Breast epithelium (tissue), 4 donors: ENCODE measurements at regions of chr16 and their contacts with region 1.

Region 1: GRCh38 chr16:76955629-76956028 is 235.4 kb upstream of the MON1B start:
- DNase-seq: no peak
- H3K4me3 ChIP-seq: no peak overlapping the region
- H3K27ac ChIP-seq: no peak overlapping the region
- H3K4me1 ChIP-seq: no peaks in the 10 kb centered on the region
- H3K27me3 ChIP-seq: no peaks in the 10 kb centered on the region
- CTCF ChIP-seq: no peak
- POLR2A ChIP-seq: no peak

Region 2: GRCh38 chr16:76386784-76387183 is 568.8 kb before region 1 on chr16:
- intact Hi-C with region 1: loop called (anchors 10 kb)
- DNase-seq: no peak
- H3K4me3 ChIP-seq: no peak overlapping the region
- H3K27ac ChIP-seq: no peak overlapping the region
- H3K4me1 ChIP-seq: no peaks in the 10 kb centered on the region
- H3K27me3 ChIP-seq: no peaks in the 10 kb centered on the region
- CTCF ChIP-seq: no peak
- POLR2A ChIP-seq: no peak

Region 3: DNA sequence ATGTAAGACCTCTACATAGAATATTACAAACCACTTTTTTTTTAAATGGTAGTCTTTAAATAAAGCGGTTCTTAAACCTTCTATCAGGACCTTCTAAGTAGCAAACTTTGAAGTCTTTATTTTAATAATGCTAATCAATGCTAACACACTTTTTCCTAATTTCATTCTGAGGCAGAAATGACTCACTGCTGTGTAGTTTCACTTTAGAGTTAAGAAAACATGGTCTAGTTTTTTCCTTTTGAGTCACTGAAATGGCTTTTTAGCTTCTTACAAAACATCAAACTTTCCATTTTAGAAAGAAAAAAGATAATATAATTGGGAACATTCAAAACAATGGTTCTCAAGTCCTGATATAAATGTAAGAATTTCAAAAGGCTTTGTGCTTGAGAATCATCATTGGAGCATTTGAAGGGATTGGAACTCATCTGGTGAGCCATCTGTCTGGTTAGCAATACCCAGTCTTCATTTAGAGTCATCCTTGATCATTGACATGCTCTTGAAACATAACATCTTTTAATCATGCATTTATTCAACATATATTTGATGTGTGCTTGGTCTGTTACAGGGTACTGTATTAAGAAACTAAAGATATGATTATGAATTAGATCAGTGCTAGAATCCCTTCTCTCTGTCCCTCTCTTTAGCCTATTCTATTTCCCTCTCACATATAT is 23.0 kb before region 1 on chr16:
- intact Hi-C with region 1: no loop called
- DNase-seq: no peak
- H3K4me3 ChIP-seq: no peak overlapping the region
- H3K27ac ChIP-seq: no peak overlapping the region
- H3K4me1 ChIP-seq: no peaks in the 10 kb centered on the region
- H3K27me3 ChIP-seq: no peaks in the 10 kb centered on the region
- CTCF ChIP-seq: no peak
- POLR2A ChIP-seq: no peak